Natural killer cell (primary cell): ENCODE measurements at regions of chr12 and their contacts with region 1.

Region 1: DNA sequence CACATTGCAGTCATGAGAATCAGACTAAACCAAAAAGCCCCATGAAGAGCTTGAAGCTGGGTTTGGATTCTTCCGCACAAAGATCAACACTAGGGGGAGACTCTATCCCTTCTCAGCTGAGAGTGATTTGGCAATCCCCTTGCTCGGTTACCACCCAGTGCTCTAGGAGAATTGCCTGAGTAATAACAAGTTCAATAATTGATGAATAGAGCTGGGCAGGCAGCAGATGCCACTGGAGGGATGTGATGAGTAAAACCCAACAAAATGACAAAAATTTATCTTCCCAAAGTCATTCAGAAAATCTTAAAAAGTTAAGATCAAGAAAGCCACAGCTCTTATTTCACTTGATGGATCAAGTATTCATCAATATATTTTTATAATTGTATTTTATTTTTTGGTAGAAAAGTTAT is 185.6 kb upstream of the ARID2 start:
- DNase-seq: peak in 1 of 2 donors; percentile 83
- ATAC-seq: peak; percentile 87 to 99 (median 96)
- H3K4me3 ChIP-seq: no peak overlapping the region
- H3K4me3 Mint-ChIP-seq: no peak overlapping the region
- H3K27ac ChIP-seq: no peak overlapping the region
- H3K27ac Mint-ChIP-seq: peak overlapping the region in 1 of 2 donors; percentile 36
- H3K4me1 ChIP-seq: no peaks in the 10 kb centered on the region
- H3K4me1 Mint-ChIP-seq: no peaks in the 10 kb centered on the region
- H3K27me3 ChIP-seq: no peaks in the 10 kb centered on the region
- H3K27me3 Mint-ChIP-seq: no peaks in the 10 kb centered on the region
- CTCF ChIP-seq: peak; percentile 75

Region 2: DNA sequence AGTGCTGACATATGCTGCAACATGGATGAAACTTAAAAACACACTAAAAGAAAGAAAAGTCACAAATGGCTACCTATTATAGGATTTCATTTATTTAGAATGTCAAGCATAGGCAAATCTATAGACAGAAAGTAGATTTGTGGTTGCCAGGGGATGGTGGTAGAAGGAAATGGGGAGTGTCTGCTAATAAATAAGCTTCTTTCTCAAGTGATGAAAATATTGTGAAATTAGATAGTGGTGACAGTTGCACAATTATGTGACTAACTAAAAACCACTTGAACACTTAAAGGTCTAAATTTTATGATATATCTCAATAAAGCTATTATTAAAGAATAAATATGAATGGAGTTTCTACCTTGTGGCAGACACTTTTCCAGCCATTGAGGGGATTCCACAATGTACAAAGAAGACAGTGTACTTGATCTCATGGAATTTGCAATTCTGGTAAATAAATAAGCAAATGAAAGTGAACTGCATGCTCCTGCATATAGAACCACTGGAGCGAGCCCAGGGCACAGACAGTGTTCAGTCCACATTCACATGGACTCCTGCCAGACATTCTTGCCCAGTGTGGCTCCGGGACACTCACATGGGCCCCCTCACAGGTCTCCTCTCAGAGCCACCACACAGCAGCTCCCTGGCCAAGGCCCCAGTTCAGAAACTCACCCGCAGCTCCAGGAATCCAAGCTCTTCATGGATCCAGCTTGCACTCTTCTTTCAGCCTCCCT is 78.5 kb after region 1 on chr12:
- intact Hi-C with region 1: no loop called
- DNase-seq: no peak
- ATAC-seq: no peak
- H3K4me3 ChIP-seq: no peak overlapping the region
- H3K4me3 Mint-ChIP-seq: no peak overlapping the region
- H3K27ac ChIP-seq: no peak overlapping the region
- H3K27ac Mint-ChIP-seq: no peak overlapping the region
- H3K4me1 ChIP-seq: no peaks in the 10 kb centered on the region
- H3K4me1 Mint-ChIP-seq: peaks cover 9 to 16% of the 10 kb centered on the region in 2 donors
- H3K27me3 ChIP-seq: no peaks in the 10 kb centered on the region
- H3K27me3 Mint-ChIP-seq: peaks cover 0 to 3% of the 10 kb centered on the region in 2 donors
- CTCF ChIP-seq: no peak

Region 3: DNA sequence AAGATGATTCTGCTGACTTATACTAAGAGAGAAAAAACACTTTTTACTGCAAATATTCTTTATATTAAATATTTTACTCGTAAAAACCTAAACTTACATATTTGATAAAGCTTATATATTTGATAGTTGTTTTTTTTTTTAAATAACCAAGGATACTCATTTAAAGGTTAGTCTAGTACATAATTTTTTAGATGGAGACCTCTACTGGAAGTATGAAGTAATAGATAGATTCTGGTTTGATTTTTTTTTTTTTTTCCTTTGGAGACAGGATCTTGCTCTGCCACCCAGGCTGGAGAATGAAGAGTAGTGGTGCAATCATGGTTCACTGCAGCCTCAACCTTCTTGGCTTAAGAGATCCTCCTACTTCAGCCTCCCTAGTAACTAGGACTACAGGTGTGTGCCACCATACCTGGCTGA is 202.0 kb after region 1 on chr12:
- intact Hi-C with region 1: loop called (anchors 5 kb)
- DNase-seq: peak in 1 of 2 donors; percentile 42
- ATAC-seq: peak in 2 of 3 donors; percentile 70 to 81
- H3K4me3 ChIP-seq: no peak overlapping the region
- H3K4me3 Mint-ChIP-seq: no peak overlapping the region
- H3K27ac ChIP-seq: no peak overlapping the region
- H3K27ac Mint-ChIP-seq: no peak overlapping the region
- H3K4me1 ChIP-seq: peaks cover 4% of the 10 kb centered on the region
- H3K4me1 Mint-ChIP-seq: peaks cover 50 to 58% of the 10 kb centered on the region in 2 donors
- H3K27me3 ChIP-seq: no peaks in the 10 kb centered on the region
- H3K27me3 Mint-ChIP-seq: no peaks in the 10 kb centered on the region
- CTCF ChIP-seq: peak; percentile 52

Region 4: DNA sequence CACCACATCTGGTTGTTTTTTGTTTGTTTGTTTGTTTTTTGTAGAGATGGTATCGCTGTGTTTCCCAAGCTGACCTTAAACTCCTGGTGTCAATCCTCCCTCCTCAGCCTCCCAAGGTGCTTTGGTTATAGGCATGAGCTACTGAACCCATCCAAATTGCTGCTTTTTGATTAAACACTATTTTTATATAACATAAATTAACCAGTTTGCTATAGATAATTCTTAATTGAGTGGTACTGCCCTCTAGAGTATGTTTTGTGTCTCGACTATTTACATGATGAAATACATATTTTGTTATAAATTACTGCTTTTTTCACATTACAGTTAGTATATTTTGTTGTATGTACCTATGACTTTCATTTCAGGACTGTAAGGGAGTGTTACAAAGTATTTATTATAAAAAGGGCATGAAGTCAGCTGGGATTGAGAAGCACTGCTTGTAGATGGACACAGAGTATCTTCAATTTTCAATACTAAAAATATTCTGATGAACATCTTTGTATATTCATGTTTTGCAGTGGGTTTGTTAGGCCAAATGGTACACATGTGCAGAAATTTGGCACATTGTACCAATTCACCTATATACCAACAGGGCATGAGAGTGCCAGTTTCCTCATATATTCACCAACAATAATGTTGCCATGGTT is 461.4 kb after region 1 on chr12:
- intact Hi-C with region 1: loop called (anchors 5 kb)
- DNase-seq: peak in 1 of 2 donors; percentile 43
- ATAC-seq: no peak
- H3K4me3 ChIP-seq: no peak overlapping the region
- H3K4me3 Mint-ChIP-seq: no peak overlapping the region
- H3K27ac ChIP-seq: no peak overlapping the region
- H3K27ac Mint-ChIP-seq: no peak overlapping the region
- H3K4me1 ChIP-seq: no peaks in the 10 kb centered on the region
- H3K4me1 Mint-ChIP-seq: no peaks in the 10 kb centered on the region
- H3K27me3 ChIP-seq: no peaks in the 10 kb centered on the region
- H3K27me3 Mint-ChIP-seq: peaks cover 0 to 2% of the 10 kb centered on the region in 2 donors
- CTCF ChIP-seq: peak; percentile 40